Sciatic nerve (tissue), 2 donors: ENCODE measurements at regions of chr16 and their contacts with region 1.

Region 1: GRCh38 chr16:82845116-82845515 is 218.3 kb downstream of the CDH13 start:
- DNase-seq: no peak
- ATAC-seq: no peak

Region 2: GRCh38 chr16:82824408-82824807 is 20.7 kb before region 1 on chr16:
- intact Hi-C with region 1: no loop called
- DNase-seq: no peak
- ATAC-seq: no peak

Region 3: GRCh38 chr16:82917886-82918595 is 72.9 kb after region 1 on chr16:
- intact Hi-C with region 1: loop called (anchors 2 kb)
- DNase-seq: no peak
- ATAC-seq: no peak